ENCODE measurements at regions of chr17 and their contacts with region 1.

Region 1: DNA sequence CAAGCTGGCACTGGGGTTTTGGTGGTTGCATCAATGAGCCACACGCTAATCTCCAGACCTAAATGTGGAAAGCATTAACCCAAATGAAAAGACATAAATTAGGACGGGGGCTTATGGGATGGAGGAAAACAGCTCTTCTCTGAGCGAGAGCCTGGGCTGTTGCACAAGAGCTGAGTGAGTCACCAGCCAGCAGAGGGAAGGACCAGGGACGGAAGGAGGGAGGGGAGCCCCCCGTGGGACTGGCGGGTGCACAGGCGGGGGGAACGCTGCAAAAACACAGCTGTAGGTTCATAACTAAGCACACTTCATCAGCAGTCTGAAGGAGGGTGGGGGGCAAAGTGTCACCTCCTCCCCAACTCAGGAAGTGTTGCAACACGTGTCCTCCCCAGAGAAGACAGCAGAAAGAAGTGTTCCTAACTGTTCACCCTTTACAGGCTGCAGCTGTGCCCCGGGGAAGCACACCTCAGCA is 83.3 kb downstream of the GAS7 start:
- DNase-seq: no peak
- ATAC-seq: peak; percentile 68; the same call in 2 of the 3 replicates
- H3K4me3 ChIP-seq: no peak overlapping the region
- H3K27ac ChIP-seq: no peak overlapping the region
- H3K4me1 ChIP-seq: no peaks in the 10 kb centered on the region
- H3K27me3 ChIP-seq: peaks cover 0 to 18% of the 10 kb centered on the region in 2 experiments; a peak in 3 of 5 replicates
- CTCF ChIP-seq: no peak
- EP300 ChIP-seq: no peak
- POLR2A ChIP-seq: no peak
- RAD21 ChIP-seq: no peak

Region 2: DNA sequence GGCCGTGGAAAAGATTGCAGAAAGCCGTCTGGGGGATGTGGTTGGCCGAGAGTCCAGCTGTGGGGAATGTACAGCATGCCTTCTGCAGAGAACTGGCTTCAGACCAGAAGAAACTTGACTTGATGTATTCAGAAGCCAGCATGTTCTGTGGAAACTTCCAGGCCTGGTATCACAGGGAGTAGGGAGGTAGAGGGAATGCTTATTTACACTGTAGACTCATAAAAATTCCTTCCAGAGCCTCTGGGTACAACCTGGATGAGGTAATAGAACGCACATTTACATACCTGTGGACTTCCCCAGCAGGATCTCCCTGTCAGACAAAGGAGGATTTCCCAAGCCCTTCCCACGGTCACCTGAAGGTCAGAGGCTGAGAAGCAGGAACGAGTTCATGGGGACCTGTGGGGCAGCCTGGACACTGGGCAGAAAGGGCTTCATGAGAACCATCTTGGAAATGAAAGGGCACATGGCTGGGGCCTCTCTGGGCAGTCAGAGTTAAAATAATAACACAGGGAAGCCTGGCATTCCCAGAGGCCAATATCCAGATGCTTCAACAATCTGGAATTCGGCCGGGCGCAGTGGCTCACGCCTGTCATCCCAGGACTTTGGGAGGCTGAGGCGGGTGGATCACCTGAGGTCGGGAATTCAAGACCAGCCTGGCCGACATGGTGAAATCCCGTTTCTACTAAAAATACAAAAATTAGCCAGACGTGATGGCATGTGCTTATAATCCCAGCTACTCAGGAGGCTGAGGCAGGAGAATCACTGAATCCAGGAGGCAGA is 95.2 kb after region 1 on chr17:
- CTCF ChIA-PET with region 1: no interaction called
- POLR2A ChIA-PET with region 1: no interaction called
- in situ Hi-C with region 1: loop called (anchors 25 kb)
- intact Hi-C with region 1: no loop called
- DNase-seq: no peak
- ATAC-seq: no peak
- H3K4me3 ChIP-seq: no peak overlapping the region
- H3K27ac ChIP-seq: no peak overlapping the region
- H3K4me1 ChIP-seq: no peaks in the 10 kb centered on the region
- H3K27me3 ChIP-seq: peaks cover 0 to 10% of the 10 kb centered on the region in 2 experiments; a peak in 2 of 5 replicates
- CTCF ChIP-seq: no peak
- EP300 ChIP-seq: no peak
- POLR2A ChIP-seq: no peak
- RAD21 ChIP-seq: no peak